GM23248 (cell line): ENCODE measurements at regions of chr2 and their contacts with region 1.

Region 1: DNA sequence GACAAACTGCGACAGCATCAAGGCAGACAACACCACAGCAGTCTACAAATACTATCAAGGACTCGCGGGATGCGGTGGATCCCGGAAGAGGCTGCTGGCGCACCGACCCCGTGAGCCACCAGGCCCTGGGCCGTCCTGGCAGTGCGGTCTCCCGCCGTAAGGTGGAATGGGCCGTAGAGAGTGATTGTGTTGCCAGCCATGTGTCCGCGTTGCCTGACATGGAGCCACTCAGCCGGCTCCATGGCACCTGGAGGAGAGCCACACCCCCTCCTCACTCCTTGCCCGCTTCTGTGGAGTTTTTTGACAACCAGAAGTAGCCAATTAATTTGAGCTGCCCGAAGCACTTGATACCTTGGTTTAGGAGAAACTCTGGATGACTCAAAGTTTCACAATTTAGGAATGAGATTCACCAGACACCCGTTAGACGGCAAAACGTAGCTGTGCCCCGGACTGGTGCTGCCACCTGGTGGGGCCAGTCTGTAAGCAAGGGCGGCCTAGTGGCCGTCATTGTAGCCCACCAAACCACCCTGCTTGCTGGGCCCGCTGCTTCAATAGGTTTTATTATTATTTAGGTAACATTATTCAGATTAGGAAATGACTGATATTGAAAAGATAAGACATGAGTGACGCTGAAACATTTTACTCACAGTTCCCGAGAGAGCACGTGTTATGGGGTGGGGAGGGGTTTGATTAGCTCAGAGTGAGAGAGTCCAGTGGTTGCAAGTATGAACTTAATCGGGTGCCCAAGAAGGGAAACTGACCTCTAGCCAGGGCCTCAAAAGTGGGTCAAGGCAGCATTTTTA is 10.2 kb upstream of the IMP4 start:
- DNase-seq: peak; percentile 91
- H3K4me3 ChIP-seq: no peak overlapping the region
- H3K27ac ChIP-seq: no peak overlapping the region
- H3K4me1 ChIP-seq: peaks cover 3% of the 10 kb centered on the region
- H3K27me3 ChIP-seq: peaks cover 32% of the 10 kb centered on the region; the same call in 1 of the 2 replicates

Region 2: GRCh38 chr2:129936334-129936934 is 396.0 kb before region 1 on chr2:
- in situ Hi-C with region 1: loop called (anchors 10 kb)
- DNase-seq: peak; percentile 34
- H3K4me3 ChIP-seq: no peak overlapping the region
- H3K27ac ChIP-seq: no peak overlapping the region
- H3K4me1 ChIP-seq: peaks cover 4% of the 10 kb centered on the region; the same call in 1 of the 2 replicates
- H3K27me3 ChIP-seq: no peaks in the 10 kb centered on the region; the same call in 1 of the 2 replicates

Region 3: DNA sequence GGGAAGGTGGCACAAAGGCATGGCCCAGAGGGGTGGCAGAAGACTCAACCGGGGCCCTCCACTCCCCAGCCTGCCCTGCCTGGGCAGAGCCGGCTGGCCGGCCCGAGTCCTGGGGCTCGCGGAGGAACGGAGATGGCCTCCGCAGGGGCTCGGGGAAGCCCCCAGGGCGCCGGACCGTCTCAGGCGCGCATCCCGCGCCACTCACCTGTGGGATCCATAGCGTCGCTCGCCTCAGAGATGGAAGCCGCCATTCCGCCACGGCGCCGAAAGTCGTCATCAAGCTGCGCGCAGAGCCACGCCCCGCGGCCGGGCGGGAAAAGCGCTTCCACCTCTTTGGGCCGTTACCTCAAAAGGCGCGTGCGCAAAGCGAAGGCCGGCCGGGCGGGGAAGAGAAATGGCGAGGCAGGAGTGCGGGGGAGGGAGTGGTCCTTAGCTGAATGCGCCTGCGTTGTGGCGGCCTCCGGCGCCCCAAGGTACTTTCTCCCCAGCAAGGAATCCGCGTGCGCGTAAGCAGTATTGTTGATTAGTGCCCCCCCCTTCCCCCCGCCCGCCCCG is 151.1 kb before region 1 on chr2 and contains the start of gene SMPD4:
- in situ Hi-C with region 1: loop called (anchors 10 kb)
- DNase-seq: peak; percentile 98
- H3K4me3 ChIP-seq: peak within 1 kb of the TSS; percentile 85
- H3K27ac ChIP-seq: peak within 1 kb of the TSS; percentile 70
- H3K4me1 ChIP-seq: peaks cover 10% of the 10 kb centered on the region
- H3K27me3 ChIP-seq: no peaks in the 10 kb centered on the region
- total RNA-seq, gene SMPD4: 20.2 and 23.8 TPM in 2 replicates